ENCODE measurements at regions of chr1 and their contacts with region 1.

Region 1: GRCh38 chr1:208238710-208239472 is 5.3 kb downstream of the PLXNA2 start:
- DNase-seq: peak; percentile 76
- H3K4me3 ChIP-seq: peak overlapping the region; percentile 14 to 96 (median 91)
- H3K27ac ChIP-seq: peak overlapping the region; percentile 97
- H3K4me1 ChIP-seq: peaks cover 74% of the 10 kb centered on the region
- H3K27me3 ChIP-seq: no peaks in the 10 kb centered on the region
- CTCF ChIP-seq: peak; percentile 78 to 87
- POLR2A ChIP-seq: no peak

Region 2: DNA sequence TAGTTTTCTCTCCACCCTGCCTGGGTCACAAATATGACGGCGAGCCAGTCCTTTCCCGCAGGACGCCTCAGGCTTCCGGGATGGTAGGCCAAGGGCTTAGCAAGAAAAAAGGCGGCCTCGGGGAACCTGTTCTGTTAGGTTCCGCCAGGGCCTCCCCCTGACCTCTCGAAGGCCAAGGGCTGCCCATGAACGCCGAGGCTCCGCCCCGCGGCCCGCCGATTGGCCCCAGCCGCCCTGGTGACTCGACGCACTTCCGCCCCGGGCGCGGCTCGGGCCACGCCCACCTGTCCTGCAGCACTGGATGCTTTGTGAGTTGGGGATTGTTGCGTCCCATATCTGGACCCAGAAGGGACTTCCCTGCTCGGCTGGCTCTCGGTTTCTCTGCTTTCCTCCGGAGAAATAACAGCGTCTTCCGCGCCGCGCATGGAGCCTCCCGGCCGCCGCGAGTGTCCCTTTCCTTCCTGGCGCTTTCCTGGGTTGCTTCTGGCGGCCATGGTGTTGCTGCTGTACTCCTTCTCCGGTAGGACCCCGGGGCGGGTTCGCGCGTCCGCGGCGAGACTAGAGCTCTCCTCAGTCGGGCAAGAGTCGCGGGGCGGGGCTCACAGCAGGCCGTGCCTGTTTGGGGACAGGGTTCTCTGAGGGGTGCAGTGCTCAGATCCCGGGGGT is 487.0 kb before region 1 on chr1 and contains the start of gene CD46:
- CTCF ChIA-PET with region 1: no interaction called
- POLR2A ChIA-PET with region 1: no interaction called
- dilution Hi-C with region 1: no loop called
- intact Hi-C with region 1: loop called (anchors 5 kb)
- DNase-seq: peak; percentile 95
- H3K4me3 ChIP-seq: peak within 1 kb of the TSS; percentile 37 to 86 (median 56)
- H3K27ac ChIP-seq: peak within 1 kb of the TSS; percentile 85
- H3K4me1 ChIP-seq: peaks cover 30% of the 10 kb centered on the region
- H3K27me3 ChIP-seq: no peaks in the 10 kb centered on the region
- CTCF ChIP-seq: no peak
- POLR2A ChIP-seq: peak; percentile 83
- total RNA-seq, gene CD46: 243 and 256 TPM in 2 replicates

Region 3: DNA sequence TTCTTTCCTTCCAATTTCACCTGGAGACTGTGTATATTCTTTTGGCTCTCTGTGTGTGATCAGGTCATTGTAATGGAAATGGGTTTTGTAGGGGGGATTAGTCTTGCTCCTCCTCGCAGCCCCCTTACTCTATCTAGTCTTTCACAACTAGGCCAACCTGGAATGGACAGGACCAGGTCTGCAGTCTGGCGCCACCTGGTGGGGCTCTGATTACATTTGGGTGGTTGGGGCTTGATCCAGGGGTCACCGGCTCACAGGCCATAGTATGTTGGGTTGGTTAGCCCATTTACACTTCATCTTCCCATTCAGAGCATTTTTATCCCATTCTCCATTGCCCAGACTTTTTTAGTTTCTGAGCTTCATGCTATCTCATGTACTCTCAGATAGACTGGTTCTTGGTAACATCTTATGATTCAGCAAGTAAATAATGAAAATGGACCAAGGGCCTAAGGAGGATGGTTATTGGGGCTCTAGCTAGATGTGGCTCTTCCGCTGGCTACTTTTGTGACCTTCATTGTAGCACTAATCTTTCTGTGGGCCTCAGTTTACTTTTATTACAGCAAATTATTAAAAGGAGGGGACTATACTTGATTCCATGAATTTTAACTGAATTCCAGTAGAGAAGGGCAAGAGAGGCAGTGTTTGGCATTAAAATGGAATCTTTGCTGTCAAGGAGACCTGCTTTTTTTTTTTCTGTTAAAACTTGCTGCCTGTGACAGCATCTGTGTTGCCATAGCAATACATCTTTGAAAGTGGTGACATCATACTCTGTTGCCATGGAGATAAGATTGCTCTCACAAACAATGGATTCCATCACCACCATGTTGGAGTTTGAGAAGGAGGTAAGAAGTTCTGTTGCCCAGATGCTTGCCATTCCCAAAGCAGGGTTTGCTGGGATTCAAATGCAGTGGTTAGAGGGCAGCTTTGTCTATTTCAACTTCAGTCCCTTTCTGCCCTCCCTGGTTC is 144.9 kb before region 1 on chr1:
- CTCF ChIA-PET with region 1: interaction called, 15 read pairs
- POLR2A ChIA-PET with region 1: no interaction called
- dilution Hi-C with region 1: no loop called
- intact Hi-C with region 1: loop called (anchors 1 kb)
- DNase-seq: peak; percentile 57
- H3K4me3 ChIP-seq: no peak overlapping the region
- H3K27ac ChIP-seq: peak overlapping the region; percentile 63
- H3K4me1 ChIP-seq: no peaks in the 10 kb centered on the region
- H3K27me3 ChIP-seq: no peaks in the 10 kb centered on the region
- CTCF ChIP-seq: peak; percentile 80 to 82
- POLR2A ChIP-seq: no peak

Region 4: DNA sequence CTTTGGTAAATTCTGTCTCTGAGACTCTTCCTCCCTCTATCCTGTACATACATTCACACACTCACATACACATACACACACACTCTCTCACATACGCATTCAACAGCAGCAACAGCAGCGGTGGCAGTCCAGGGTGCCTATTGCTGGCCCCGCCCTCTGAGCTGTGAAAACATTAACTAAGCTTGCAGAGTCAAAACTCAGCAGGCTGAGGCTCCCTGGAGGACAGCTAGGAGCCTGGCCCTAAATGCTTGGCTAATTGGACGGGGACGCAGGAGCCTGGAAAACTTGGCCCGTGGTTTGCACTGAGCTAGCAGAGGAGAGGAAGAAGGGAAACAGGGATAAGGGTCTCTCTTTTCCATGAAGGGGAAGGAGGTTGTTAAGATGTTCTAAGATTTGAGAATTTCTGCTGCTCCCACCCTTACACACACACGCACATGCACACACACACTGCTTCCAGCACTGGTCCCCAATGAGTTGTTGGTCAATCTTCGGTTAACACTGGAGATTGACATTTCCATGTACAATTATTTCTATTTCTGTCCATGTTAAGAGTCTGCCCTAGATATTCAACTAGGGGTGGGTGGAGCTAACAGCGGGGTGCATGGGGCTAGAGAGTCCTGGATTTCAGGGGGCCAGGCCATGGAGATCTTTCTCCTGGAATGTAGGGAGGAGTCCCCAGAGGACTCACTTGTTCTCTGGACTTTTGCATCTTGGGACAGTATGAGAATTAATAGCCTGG is 88.9 kb before region 1 on chr1:
- CTCF ChIA-PET with region 1: interaction called, 26 read pairs
- POLR2A ChIA-PET with region 1: no interaction called
- dilution Hi-C with region 1: loop called (anchors 25 kb)
- intact Hi-C with region 1: no loop called
- DNase-seq: no peak
- H3K4me3 ChIP-seq: no peak overlapping the region
- H3K27ac ChIP-seq: no peak overlapping the region
- H3K4me1 ChIP-seq: peaks cover 15% of the 10 kb centered on the region
- H3K27me3 ChIP-seq: no peaks in the 10 kb centered on the region
- CTCF ChIP-seq: no peak
- POLR2A ChIP-seq: no peak

Region 5: GRCh38 chr1:208170252-208170651 is 68.6 kb before region 1 on chr1:
- CTCF ChIA-PET with region 1: interaction called, 21 read pairs
- POLR2A ChIA-PET with region 1: no interaction called
- dilution Hi-C with region 1: no loop called
- intact Hi-C with region 1: loop called (anchors 1 kb)
- DNase-seq: no peak
- H3K4me3 ChIP-seq: no peak overlapping the region
- H3K27ac ChIP-seq: no peak overlapping the region
- H3K4me1 ChIP-seq: peaks cover 17% of the 10 kb centered on the region
- H3K27me3 ChIP-seq: no peaks in the 10 kb centered on the region
- CTCF ChIP-seq: no peak
- POLR2A ChIP-seq: no peak

Region 6: GRCh38 chr1:208201229-208201628 is 37.7 kb before region 1 on chr1:
- CTCF ChIA-PET with region 1: interaction called, 714 read pairs
- POLR2A ChIA-PET with region 1: interaction called, 8 read pairs
- dilution Hi-C with region 1: no loop called
- intact Hi-C with region 1: loop called (anchors 1 kb)
- DNase-seq: peak; percentile 96
- H3K4me3 ChIP-seq: no peak overlapping the region
- H3K27ac ChIP-seq: peak overlapping the region; percentile 92
- H3K4me1 ChIP-seq: peaks cover 64% of the 10 kb centered on the region
- H3K27me3 ChIP-seq: no peaks in the 10 kb centered on the region
- CTCF ChIP-seq: no peak
- POLR2A ChIP-seq: no peak

Region 7: GRCh38 chr1:208219659-208220282 is 19.1 kb before region 1 on chr1:
- CTCF ChIA-PET with region 1: interaction called, 714 read pairs
- POLR2A ChIA-PET with region 1: interaction called, 11 read pairs
- dilution Hi-C with region 1: no loop called
- intact Hi-C with region 1: loop called (anchors 1 kb)
- DNase-seq: peak; percentile 82
- H3K4me3 ChIP-seq: no peak overlapping the region
- H3K27ac ChIP-seq: peak overlapping the region; percentile 91
- H3K4me1 ChIP-seq: peaks cover 90% of the 10 kb centered on the region
- H3K27me3 ChIP-seq: no peaks in the 10 kb centered on the region
- CTCF ChIP-seq: no peak
- POLR2A ChIP-seq: peak; percentile 33